ENCODE measurements at regions of chr10 and their contacts with region 1.

Region 1: GRCh38 chr10:101693978-101694673 is 844 bp downstream of the FBXW4 start:
- DNase-seq: peak; percentile 84
- ATAC-seq: peak; percentile 66
- H3K4me3 ChIP-seq: peak overlapping the region; percentile 11 to 99 (median 87)
- H3K4me3 Mint-ChIP-seq: peak overlapping the region; percentile 97
- H3K27ac ChIP-seq: peak overlapping the region; percentile 96
- H3K27ac Mint-ChIP-seq: peak overlapping the region; percentile 99
- H3K4me1 ChIP-seq: peaks cover 14 to 22% of the 10 kb centered on the region in 2 donors
- H3K4me1 Mint-ChIP-seq: peaks cover 45% of the 10 kb centered on the region
- H3K27me3 ChIP-seq: no peaks in the 10 kb centered on the region
- H3K27me3 Mint-ChIP-seq: no peaks in the 10 kb centered on the region
- CTCF ChIP-seq: no peak

Region 2: GRCh38 chr10:101112799-101113594 is 581.1 kb before region 1 on chr10:
- CTCF ChIA-PET with region 1: no interaction called
- POLR2A ChIA-PET with region 1: interaction called, 14 read pairs
- intact Hi-C with region 1: no loop called
- DNase-seq: no peak
- ATAC-seq: no peak
- H3K4me3 ChIP-seq: no peak overlapping the region
- H3K4me3 Mint-ChIP-seq: no peak overlapping the region
- H3K27ac ChIP-seq: no peak overlapping the region
- H3K27ac Mint-ChIP-seq: no peak overlapping the region
- H3K4me1 ChIP-seq: no peaks in the 10 kb centered on the region
- H3K4me1 Mint-ChIP-seq: no peaks in the 10 kb centered on the region
- H3K27me3 ChIP-seq: peaks cover 0 to 24% (median 3%) of the 10 kb centered on the region in 4 experiments
- H3K27me3 Mint-ChIP-seq: peaks cover 40% of the 10 kb centered on the region
- CTCF ChIP-seq: no peak

Region 3: DNA sequence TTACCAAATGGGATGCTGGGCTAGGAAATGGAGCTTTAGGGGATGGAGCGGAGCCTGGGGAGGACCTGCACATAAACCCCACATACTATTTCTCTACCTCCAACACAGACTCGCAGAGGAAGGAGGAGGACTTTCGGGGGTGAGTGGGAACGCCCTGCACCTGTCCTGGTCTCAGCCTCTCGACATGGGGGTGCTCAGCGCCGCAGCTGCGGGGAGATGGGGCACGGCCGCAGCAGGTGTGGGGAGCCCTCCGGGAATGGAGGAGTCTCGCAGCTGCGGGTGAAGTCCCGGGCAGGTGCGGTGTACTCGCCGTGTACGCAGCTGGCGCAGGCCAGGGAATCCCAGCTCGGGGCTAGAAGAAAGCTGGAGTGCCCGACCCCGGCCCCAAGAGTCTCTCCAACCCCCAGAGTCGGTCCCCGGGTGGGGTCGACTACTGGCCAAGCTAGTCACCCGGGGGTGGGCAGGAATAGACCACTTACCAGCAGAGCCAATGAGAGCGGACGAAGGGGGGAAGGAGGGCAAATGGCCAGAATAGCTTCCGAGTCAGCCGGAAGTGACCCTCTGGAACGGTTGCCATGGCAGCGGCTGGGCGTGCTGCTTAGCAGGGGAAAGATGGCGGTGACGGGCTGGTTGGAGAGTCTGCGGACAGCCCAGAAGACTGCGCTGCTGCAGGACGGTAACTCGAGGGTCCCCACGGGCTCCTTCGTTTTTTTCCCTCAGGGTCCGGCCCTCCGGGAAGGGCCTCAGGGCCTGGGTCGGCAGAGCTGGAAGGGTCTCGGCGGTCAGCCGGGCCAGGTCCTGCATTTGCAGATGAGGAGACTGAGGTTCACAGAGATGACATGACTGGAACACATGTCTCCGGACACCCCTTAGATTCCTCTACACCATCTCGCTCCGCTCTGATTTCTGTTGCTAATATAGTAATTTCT is 106.1 kb before region 1 on chr10 and contains the starts of genes DPCD and POLL:
- CTCF ChIA-PET with region 1: no interaction called
- POLR2A ChIA-PET with region 1: interaction called, 3 read pairs
- intact Hi-C with region 1: loop called (anchors 5 kb)
- DNase-seq: peak; percentile 92
- ATAC-seq: peak; percentile 96
- H3K4me3 ChIP-seq: peak within 1 kb of the TSS; percentile 57 to 95 (median 91)
- H3K4me3 Mint-ChIP-seq: peak within 1 kb of the TSS; percentile 96
- H3K27ac ChIP-seq: peak within 1 kb of the TSS; percentile 70 to 86
- H3K27ac Mint-ChIP-seq: peak within 1 kb of the TSS; percentile 85
- H3K4me1 ChIP-seq: peaks cover 15 to 19% of the 10 kb centered on the region in 2 donors
- H3K4me1 Mint-ChIP-seq: peaks cover 21% of the 10 kb centered on the region
- H3K27me3 ChIP-seq: no peaks in the 10 kb centered on the region
- H3K27me3 Mint-ChIP-seq: no peaks in the 10 kb centered on the region
- CTCF ChIP-seq: no peak
- total RNA-seq, gene DPCD: 1.6 and 2.2 TPM in 2 replicates
- total RNA-seq, gene POLL: 46.7 TPM in 2 replicates

Measured in B cell (primary cell).